ENCODE measurements at regions of chr4 and their contacts with region 1.

Region 1: GRCh38 chr4:87848622-87849351 is 16.0 kb downstream of the MEPE start:
- DNase-seq: peak; percentile 48
- H3K4me3 Mint-ChIP-seq: peak overlapping the region; percentile 40
- H3K27ac Mint-ChIP-seq: no peak overlapping the region
- H3K4me1 Mint-ChIP-seq: peaks cover 5% of the 10 kb centered on the region
- H3K27me3 Mint-ChIP-seq: peaks cover 25% of the 10 kb centered on the region

Region 2: GRCh38 chr4:87353592-87353991 is 495.2 kb before region 1 on chr4:
- CTCF ChIA-PET with region 1: interaction called, 6 read pairs
- POLR2A ChIA-PET with region 1: no interaction called
- intact Hi-C with region 1: loop called (anchors 5 kb)
- DNase-seq: peak; percentile 37
- H3K4me3 Mint-ChIP-seq: no peak overlapping the region
- H3K27ac Mint-ChIP-seq: no peak overlapping the region
- H3K4me1 Mint-ChIP-seq: no peaks in the 10 kb centered on the region
- H3K27me3 Mint-ChIP-seq: no peaks in the 10 kb centered on the region

Region 3: GRCh38 chr4:87498446-87498900 is 350.3 kb before region 1 on chr4:
- CTCF ChIA-PET with region 1: interaction called, 5 read pairs
- POLR2A ChIA-PET with region 1: no interaction called
- intact Hi-C with region 1: loop called (anchors 2 kb)
- DNase-seq: no peak
- H3K4me3 Mint-ChIP-seq: no peak overlapping the region
- H3K27ac Mint-ChIP-seq: no peak overlapping the region
- H3K4me1 Mint-ChIP-seq: peaks cover 21% of the 10 kb centered on the region
- H3K27me3 Mint-ChIP-seq: no peaks in the 10 kb centered on the region

Region 4: GRCh38 chr4:87679449-87680169 is 169.2 kb before region 1 on chr4:
- CTCF ChIA-PET with region 1: interaction called, 38 read pairs
- POLR2A ChIA-PET with region 1: no interaction called
- intact Hi-C with region 1: loop called (anchors 1 kb)
- DNase-seq: peak; percentile 36
- H3K4me3 Mint-ChIP-seq: no peak overlapping the region
- H3K27ac Mint-ChIP-seq: no peak overlapping the region
- H3K4me1 Mint-ChIP-seq: no peaks in the 10 kb centered on the region
- H3K27me3 Mint-ChIP-seq: no peaks in the 10 kb centered on the region

Region 5: GRCh38 chr4:87807402-87807801 is 41.4 kb before region 1 on chr4:
- CTCF ChIA-PET with region 1: no interaction called
- POLR2A ChIA-PET with region 1: no interaction called
- intact Hi-C with region 1: no loop called
- DNase-seq: no peak
- H3K4me3 Mint-ChIP-seq: no peak overlapping the region
- H3K27ac Mint-ChIP-seq: no peak overlapping the region
- H3K4me1 Mint-ChIP-seq: no peaks in the 10 kb centered on the region
- H3K27me3 Mint-ChIP-seq: no peaks in the 10 kb centered on the region

Region 6: DNA sequence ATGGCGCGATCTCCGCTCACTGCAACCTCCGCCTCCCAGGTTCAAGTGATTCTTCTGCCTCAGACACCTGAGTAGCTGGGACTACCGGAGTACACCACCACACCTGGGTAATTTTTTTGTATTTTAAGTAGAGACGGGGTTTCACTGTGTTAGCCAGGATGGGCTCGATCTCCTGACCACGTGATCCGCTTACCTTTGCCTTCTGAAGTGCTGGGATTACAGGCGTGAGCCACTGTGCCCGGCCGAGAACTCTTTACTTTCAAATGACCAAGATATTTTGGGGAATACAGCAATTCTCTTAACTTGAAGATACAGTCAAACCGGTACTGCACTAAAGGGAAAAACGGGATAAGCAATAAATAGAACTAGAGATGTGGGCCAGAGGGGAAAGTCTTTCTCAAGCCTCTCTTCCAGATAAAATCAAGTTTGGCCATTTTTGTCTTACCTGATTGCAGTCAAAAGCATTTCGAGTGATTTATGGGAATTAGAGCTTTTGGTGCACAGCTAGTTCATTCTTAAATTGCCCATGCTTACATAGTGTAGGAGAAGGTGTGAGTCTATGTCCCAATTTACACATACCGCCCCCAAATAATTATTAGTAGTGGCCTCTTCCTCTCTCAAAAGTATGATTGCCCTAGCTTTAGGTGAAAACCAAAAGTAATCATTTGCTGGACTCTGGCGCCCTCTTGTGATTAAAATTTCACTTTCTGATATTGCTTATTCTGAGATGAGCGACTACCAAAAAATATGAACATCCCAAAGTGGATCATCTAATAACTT is 362.9 kb after region 1 on chr4:
- CTCF ChIA-PET with region 1: interaction called, 21 read pairs
- POLR2A ChIA-PET with region 1: no interaction called
- intact Hi-C with region 1: loop called (anchors 1 kb)
- DNase-seq: peak; percentile 28
- H3K4me3 Mint-ChIP-seq: no peak overlapping the region
- H3K27ac Mint-ChIP-seq: no peak overlapping the region
- H3K4me1 Mint-ChIP-seq: no peaks in the 10 kb centered on the region
- H3K27me3 Mint-ChIP-seq: peaks cover 1% of the 10 kb centered on the region